Head of caudate nucleus (tissue), 42 donors: ENCODE measurements at regions of chr15 and their contacts with region 1.

Region 1: DNA sequence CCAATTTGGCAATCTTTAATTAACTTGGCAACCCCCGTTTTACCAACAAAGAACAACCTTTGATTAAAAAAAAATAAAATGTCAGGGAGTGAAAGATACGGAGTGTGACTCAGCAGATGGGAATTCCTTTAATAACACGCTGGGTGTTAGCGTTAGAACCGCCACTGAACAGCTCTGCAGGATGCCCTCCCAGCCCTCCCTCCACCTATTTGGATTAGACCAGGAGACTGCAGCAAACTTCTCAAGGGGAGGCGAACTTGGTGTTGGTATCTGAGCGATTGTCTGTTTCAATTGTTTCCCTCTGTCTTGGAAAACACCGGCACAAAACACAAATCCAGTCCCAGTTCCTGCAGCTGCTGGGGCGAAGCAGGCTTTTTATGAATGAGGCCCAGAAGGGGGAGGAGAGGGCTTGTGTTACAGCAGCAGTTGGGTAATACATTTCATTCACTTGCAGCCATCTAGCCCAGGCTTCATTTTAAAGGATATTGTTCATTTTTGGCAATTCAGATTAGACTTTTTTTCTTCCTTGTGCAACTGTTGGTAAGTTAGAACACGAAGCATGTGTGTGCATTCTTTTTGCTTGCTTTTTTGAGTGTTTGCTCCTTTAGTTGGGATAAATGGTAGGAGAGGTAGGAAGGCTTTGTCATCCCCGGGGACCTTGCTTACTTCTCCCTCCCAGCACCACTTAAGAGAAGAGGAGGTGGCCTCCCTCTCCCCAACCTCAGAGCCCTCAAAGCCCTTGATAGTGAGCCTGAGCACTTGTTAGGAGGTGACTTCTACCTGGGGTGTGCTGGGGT is 152.3 kb downstream of the IGF1R start:
- DNase-seq: peak; percentile 44 to 93 (median 79)

Region 2: GRCh38 chr15:98713585-98714001 is 87.0 kb before region 1 on chr15:
- intact Hi-C with region 1: no loop called
- DNase-seq: peak in 2 of 42 donors; percentile 15 to 54

Region 3: DNA sequence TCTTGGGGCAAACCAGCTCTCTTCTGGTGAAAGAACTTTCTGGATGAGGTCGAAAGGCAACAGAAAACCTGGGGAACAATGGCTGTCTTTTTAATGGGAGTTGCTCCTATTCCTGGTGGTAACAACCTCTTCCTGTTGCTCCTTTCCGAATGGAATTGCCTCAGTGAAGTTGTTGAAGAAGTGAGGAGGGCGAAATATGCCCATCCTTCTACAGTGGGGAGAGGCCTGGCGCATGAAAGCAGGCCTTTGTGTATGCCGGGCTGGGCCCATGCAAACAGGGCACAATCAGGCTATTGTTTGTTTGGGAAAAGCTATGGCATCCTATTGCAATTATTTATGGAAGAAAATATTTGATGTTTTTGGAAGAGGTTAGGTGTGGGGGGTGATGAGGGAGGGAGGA is 14.6 kb after region 1 on chr15:
- intact Hi-C with region 1: loop called (anchors 2 kb)
- DNase-seq: peak; percentile 29 to 91 (median 76)

Region 4: GRCh38 chr15:98927022-98927421 is 126.4 kb after region 1 on chr15:
- intact Hi-C with region 1: no loop called
- DNase-seq: no peak